ENCODE measurements at regions of chrX and their contacts with region 1.

Region 1: DNA sequence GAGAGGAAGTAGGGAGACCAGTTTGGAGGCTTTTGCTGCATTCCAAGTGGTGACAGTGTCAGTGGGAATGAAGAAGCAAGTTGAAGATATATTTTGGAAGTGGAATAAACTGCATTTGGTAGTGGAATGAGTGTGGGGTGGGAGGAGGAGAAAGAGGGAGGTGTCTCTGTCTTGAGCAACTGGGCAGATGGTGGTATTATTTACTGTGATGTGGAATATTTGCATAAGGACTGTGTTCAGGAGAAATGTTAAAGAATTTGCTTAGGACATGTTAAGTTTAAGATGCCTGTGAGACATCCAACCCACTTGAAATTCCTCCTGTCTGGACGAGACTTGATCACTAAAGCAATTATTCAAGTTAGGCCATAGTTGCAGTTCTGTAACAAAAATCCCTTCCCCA is 448.9 kb upstream of the AMOT start:
- DNase-seq: no peak

Region 2: DNA sequence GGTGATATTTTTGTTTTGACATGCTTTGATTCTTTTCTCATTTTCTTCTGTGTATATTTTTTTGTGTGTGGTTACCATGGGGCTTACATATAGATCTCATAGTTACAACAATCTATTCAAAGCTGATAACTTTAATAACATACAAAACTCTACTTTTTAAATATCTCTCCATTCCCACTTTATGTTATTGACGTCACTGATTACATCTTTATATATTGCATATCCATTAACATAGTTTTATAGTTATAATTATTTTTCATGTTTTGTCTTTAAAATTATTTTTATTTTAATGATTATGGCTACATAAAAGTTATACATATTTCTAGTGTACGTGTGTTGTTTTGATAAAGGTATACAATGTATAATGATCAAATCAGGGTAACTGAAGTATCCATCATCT is 24.9 kb before region 1 on chrX:
- intact Hi-C with region 1: loop called in 1 of 2 experiments (anchors 1 kb)
- DNase-seq: no peak

Region 3: DNA sequence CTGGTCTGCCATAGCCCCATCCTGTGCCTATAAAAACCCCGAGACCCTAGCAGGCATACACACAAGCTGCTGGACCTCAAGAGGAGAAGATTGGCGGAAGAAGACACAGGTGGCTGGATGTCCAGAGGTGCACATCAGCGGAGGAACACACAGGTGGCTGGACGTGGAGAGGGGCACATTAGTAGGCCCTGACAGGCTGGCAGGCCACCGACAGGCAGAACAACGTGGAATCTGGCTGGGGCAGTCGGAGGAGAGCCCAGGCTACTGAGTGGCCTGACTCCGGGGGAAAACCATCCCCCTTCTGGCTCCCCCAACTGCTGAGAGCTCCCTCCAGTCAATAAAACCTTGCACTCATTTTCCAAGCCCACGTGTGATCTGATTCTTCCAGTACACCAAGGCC is 63.6 kb after region 1 on chrX:
- intact Hi-C with region 1: no loop called
- DNase-seq: peak; percentile 50

Measured in posterior vena cava (tissue), 2 donors.